ENCODE measurements at regions of chr1 and their contacts with region 1.

Region 1: DNA sequence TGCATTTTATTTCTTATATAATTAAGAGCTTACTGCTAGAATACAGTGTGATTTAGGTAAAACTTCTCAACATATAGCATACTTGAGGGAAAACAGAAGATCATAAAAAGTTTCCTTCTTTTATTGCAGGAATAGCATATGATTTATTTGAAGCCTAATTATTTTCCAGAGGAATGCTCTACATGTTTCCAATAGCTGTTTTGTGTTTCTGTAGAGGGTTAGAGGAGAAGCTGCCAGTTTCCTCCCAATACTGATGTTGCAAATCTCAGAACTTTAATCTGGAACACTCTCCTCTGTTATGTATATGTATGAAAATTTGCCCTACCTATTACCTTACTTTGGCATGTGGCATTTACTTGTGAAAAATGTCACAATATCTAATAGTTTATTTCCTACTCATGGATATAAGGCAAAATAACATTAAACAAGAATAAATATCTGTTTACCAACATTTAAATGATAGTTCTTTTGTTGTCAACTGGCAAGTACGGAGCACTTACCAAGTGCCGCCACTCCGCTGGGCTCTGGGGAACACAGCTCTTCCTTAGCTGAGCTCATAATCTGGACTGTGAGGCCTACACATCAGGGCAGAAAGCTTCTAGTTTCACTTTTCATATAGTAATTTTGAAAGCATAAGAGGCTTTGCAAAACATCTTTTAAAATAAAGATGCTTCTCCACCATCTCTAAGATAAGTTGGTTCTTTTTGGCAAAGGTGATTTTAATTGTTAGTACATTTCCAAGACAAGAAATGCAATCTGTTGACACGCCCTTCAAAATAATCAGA is 239.8 kb upstream of the C1orf105 start:
- DNase-seq: peak; percentile 5
- H3K4me3 ChIP-seq: no peak overlapping the region
- H3K27ac ChIP-seq: peak overlapping the region; percentile 6 to 46
- H3K4me1 ChIP-seq: no peaks in the 10 kb centered on the region
- H3K27me3 ChIP-seq: no peaks in the 10 kb centered on the region
- CTCF ChIP-seq: no peak
- POLR2A ChIP-seq: no peak

Region 2: GRCh38 chr1:172144445-172145061 is 36.1 kb before region 1 on chr1:
- intact Hi-C with region 1: loop called (anchors 5 kb)
- DNase-seq: peak; percentile 23
- H3K4me3 ChIP-seq: peak overlapping the region; percentile 26 to 28
- H3K27ac ChIP-seq: peak overlapping the region; percentile 68 to 69
- H3K4me1 ChIP-seq: no peaks in the 10 kb centered on the region
- H3K27me3 ChIP-seq: no peaks in the 10 kb centered on the region
- CTCF ChIP-seq: no peak
- POLR2A ChIP-seq: no peak

Region 3: DNA sequence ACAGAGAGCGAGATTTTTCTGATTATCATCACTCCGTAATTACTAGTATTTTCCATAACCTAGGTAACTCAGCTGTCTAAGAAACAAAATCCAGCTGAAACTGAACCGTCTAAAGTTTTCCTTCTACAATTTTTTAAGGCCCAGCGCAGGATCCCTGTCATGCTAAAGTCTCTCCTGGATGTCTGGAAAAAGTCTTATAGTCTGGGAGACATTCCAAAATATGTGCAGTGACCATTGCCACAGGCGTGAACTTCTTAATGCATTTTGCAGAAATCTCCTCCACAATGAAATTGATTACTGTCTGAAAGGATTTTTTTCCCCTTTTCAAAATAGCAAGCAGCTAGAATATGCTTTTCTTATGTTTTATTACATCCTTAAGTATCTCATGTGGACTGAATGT is 30.5 kb after region 1 on chr1:
- intact Hi-C with region 1: no loop called
- DNase-seq: no peak
- H3K4me3 ChIP-seq: no peak overlapping the region
- H3K27ac ChIP-seq: no peak overlapping the region
- H3K4me1 ChIP-seq: no peaks in the 10 kb centered on the region
- H3K27me3 ChIP-seq: no peaks in the 10 kb centered on the region
- CTCF ChIP-seq: no peak
- POLR2A ChIP-seq: no peak

Region 4: DNA sequence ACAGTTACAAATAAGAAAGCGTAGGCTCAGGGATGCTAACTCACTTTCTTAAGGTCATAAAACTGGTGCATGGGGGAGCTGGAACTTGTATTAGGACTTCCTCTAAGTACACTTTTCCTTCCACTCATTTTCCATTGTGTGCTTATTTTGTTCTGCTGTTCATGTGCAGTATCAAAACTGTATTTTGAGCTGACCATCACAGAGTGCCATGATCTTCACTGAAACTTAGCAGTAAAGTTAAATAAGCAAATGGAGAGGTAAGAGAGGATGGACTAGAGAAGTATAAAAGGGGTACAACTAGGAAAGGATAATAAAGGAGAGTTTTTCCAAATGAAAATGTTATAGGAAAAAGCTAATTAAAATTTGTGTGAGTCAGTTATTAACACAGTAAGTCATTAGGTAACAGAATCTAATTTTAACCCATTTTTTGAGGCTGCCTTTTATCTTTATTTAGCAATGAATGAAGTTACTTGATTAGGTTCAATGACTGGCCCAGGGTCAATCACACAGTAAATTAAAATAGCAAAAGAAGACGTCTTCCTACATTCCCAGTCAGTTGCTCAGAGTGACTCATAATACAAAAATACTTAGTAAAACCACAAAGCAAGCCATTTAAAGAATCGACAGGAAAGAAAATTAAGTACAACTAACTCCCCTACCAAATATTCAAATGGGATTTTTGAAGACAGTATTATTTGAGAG is 74.0 kb after region 1 on chr1:
- intact Hi-C with region 1: no loop called
- DNase-seq: no peak
- H3K4me3 ChIP-seq: no peak overlapping the region
- H3K27ac ChIP-seq: no peak overlapping the region
- H3K4me1 ChIP-seq: no peaks in the 10 kb centered on the region
- H3K27me3 ChIP-seq: no peaks in the 10 kb centered on the region
- CTCF ChIP-seq: no peak
- POLR2A ChIP-seq: no peak

Measured in prostate gland (tissue), 2 donors.